Gastrocnemius medialis (tissue), 4 donors: ENCODE measurements at regions of chr1 and their contacts with region 1.

Region 1: GRCh38 chr1:175023043-175023921 is at the start of gene MRPS14:
- DNase-seq: peak; percentile 95 to 98
- ATAC-seq: peak; percentile 98
- H3K4me3 ChIP-seq: peak within 1 kb of the TSS; percentile 93 to 99 (median 98)
- H3K27ac ChIP-seq: peak within 1 kb of the TSS; percentile 88 to 95 (median 90)
- H3K4me1 ChIP-seq: peaks cover 15 to 22% of the 10 kb centered on the region in 2 donors
- H3K27me3 ChIP-seq: no peaks in the 10 kb centered on the region
- CTCF ChIP-seq: no peak
- POLR2A ChIP-seq: peak; percentile 84 to 86
- total RNA-seq, gene MRPS14: 10.8 to 15.6 (median 12.3) TPM

Region 2: GRCh38 chr1:174999216-174999925 is 23.9 kb before region 1 on chr1:
- in situ Hi-C with region 1: no loop called
- intact Hi-C with region 1: loop called (anchors 1 kb)
- DNase-seq: peak; percentile 96 to 98
- ATAC-seq: peak; percentile 93 to 98
- H3K4me3 ChIP-seq: peak overlapping the region; percentile 72 to 83 (median 74)
- H3K27ac ChIP-seq: peak overlapping the region; percentile 94 to 97 (median 96)
- H3K4me1 ChIP-seq: peaks cover 17 to 24% of the 10 kb centered on the region in 2 donors
- H3K27me3 ChIP-seq: no peaks in the 10 kb centered on the region
- CTCF ChIP-seq: no peak
- POLR2A ChIP-seq: peak; percentile 86 to 91

Region 3: GRCh38 chr1:175192630-175193526 is 169.6 kb after region 1 on chr1 and contains the start of gene KIAA0040:
- in situ Hi-C with region 1: no loop called
- intact Hi-C with region 1: loop called (anchors 5 kb)
- DNase-seq: peak; percentile 53 to 69
- ATAC-seq: peak; percentile 75 to 83
- H3K4me3 ChIP-seq: peak within 1 kb of the TSS; percentile 76 to 90 (median 78)
- H3K27ac ChIP-seq: peak within 1 kb of the TSS; percentile 86 to 95 (median 91)
- H3K4me1 ChIP-seq: peaks cover 10 to 43% of the 10 kb centered on the region in 2 donors
- H3K27me3 ChIP-seq: no peaks in the 10 kb centered on the region
- CTCF ChIP-seq: no peak
- POLR2A ChIP-seq: peak; percentile 10 to 29
- total RNA-seq, gene KIAA0040: 17.5 to 33.1 (median 19.5) TPM

Region 4: DNA sequence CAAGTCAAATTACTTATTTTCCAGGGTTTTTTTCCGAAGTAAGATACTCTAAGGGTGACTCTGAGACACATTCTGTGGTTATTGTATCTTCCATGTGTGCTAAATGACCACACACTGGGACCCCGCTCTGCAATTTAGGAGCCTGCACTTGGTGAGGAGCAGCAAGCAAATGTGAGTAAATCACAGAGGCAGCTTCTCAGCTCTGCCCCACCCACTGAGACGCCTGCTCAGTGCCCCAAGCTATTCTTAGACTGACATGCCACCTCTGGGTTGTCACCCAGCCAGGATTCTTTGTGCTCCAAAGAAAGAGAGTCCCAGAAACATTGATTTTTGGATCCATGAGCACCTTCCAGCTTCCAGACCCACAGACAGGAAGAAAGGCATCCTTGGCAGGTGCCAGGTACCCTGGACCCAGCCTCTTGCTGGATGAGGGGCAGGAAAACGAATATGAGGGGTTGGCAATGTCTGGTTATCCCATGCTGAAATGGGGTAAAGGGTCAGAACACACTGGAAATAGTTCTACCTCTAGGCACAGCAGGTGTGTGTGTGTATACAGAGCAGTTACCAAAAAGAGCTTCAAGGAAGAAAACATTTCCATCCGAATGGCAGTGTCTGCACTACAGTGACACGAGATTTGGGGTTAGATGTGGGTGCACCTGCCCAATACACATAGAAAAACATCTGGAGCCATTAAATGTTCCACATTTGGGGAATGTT is 679.0 kb after region 1 on chr1:
- in situ Hi-C with region 1: no loop called
- intact Hi-C with region 1: no loop called
- DNase-seq: no peak
- ATAC-seq: no peak
- H3K4me3 ChIP-seq: no peak overlapping the region
- H3K27ac ChIP-seq: no peak overlapping the region
- H3K4me1 ChIP-seq: peaks cover 10% of the 10 kb centered on the region in 2 donors
- H3K27me3 ChIP-seq: no peaks in the 10 kb centered on the region
- CTCF ChIP-seq: no peak
- POLR2A ChIP-seq: no peak